ENCODE measurements at regions of chr6 and their contacts with region 1.

Region 1: DNA sequence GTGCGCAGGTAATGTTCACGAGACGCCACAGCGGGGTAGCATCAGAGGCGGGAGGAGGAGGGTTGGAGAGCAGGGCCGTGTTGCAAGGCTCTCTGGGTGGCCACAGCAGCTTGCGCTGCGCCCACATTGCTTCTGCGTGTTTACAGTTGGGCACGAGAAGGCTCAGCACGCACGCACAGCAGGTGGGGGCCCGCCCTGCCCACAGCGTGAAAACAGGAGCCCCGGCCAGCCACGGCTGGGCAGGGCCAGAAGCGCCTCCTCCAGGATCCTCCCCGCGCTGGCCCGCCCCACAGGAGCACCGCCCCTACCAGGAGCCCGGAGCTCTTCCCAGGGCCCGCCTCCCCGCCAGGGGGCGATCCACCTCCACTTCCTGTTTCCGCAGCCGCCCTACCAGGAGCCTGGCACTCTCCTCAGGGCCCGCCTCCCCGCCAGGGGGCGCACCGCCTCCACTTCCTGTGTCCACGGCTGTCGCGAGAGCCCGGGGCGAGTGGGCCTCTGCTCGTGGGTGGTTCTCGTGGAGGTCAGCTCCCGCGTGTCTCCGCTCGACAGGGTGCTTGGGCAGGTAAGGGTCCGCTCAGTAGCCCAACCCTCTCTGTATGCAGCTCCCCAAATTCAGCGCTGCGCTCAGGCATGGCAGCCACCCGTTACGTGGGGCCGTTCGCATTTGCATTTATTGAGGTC is at the start of gene FAM50B:
- DNase-seq: peak; percentile 57
- H3K4me3 ChIP-seq: peak within 1 kb of the TSS; percentile 64
- H3K27ac ChIP-seq: peak within 1 kb of the TSS; percentile 65
- H3K27me3 ChIP-seq: no peaks in the 10 kb centered on the region
- CTCF ChIP-seq: peak; percentile 80
- polyA plus RNA-seq, gene FAM50B: 4.5 and 5.5 TPM in 2 replicates

Region 2: DNA sequence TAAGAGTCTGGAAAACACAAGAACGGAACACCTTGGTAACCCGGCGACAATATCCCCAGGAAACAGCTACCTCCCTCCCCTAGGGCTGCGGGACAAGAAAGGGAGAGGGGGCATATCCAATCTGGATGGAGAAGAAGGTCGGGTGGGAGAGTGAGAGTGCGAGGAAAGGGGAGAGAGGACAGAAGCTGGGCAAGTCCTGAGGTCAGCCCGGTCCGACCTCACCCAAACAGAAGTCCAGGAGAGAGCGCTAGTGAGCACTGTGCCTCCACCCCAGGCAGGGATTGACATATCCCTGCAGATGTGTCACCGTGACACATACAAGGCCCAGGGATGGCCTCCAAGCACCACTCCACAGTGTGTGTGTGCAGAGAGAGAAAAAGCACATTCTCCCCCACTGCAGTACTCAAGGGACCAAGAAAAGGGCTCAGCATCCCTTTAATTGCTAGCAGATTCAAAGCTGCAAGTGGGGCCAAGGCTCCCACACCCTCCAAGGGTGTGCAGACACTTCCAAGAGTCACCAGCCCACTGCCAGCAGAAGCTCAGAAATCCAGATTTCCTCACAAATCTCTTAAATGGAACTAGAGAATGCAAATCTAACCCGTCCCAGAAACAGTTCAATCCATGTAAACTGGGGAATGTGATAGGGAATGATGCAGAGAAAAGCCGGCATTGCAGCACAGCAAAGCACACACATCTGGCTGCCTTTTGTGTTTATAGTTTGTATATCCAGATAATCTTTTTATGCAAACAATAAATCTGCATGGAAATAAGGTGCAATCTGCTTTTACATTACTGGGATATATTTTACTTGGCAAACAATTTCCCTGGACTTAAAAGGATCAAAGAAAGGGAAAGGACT is 100.6 kb before region 1 on chr6:
- CTCF ChIA-PET with region 1: interaction called, 23 read pairs
- POLR2A ChIA-PET with region 1: interaction called, 4 read pairs
- DNase-seq: no peak
- H3K4me3 ChIP-seq: peak overlapping the region; percentile 90
- H3K27ac ChIP-seq: peak overlapping the region; percentile 68
- H3K27me3 ChIP-seq: no peaks in the 10 kb centered on the region
- CTCF ChIP-seq: peak; percentile 76

Region 3: GRCh38 chr6:3825851-3826581 is 23.0 kb before region 1 on chr6:
- CTCF ChIA-PET with region 1: interaction called, 13 read pairs
- POLR2A ChIA-PET with region 1: interaction called, 3 read pairs
- DNase-seq: peak; percentile 90
- H3K4me3 ChIP-seq: no peak overlapping the region
- H3K27ac ChIP-seq: peak overlapping the region; percentile 96
- H3K27me3 ChIP-seq: no peaks in the 10 kb centered on the region
- CTCF ChIP-seq: no peak

Region 4: GRCh38 chr6:3990692-3991501 is 141.8 kb after region 1 on chr6:
- CTCF ChIA-PET with region 1: interaction called, 42 read pairs
- POLR2A ChIA-PET with region 1: no interaction called
- DNase-seq: peak; percentile 76
- H3K4me3 ChIP-seq: no peak overlapping the region
- H3K27ac ChIP-seq: no peak overlapping the region
- H3K27me3 ChIP-seq: no peaks in the 10 kb centered on the region
- CTCF ChIP-seq: peak; percentile 97